A549 (cell line): ENCODE measurements at regions of chr9 and their contacts with region 1.

Region 1: DNA sequence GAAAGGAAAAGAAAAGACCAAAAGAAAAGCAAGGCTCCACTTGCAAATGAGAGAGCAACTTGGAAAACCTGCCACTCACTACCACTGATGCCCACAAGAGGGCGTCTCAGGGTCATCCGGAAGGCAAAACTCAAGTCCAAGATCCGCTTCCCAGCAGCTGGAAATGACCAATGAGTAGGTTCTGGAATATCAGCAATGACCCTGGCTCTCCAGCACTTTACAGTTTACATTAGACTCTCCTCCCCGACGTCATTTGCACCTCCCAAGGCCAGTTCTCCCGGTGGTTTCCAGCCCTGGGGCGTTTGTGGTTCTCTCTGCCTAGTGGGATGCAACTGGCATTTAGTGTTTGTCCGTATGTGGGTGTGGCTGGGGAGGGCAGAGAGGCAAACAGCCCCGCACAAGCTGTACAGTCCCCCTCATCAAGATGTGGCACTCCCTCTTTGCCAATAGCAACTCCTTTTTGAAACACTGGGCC is 193.8 kb upstream of the ZNF618 start:
- DNase-seq: peak; percentile 84 to 94
- ATAC-seq: peak; percentile 83 to 95
- H3K4me3 ChIP-seq: no peak overlapping the region
- H3K27ac ChIP-seq: peak overlapping the region; percentile 51 to 63
- H3K4me1 ChIP-seq: peaks cover 6% of the 10 kb centered on the region; the same call in 2 of the 3 replicates
- CTCF ChIP-seq: peak; percentile 93
- EP300 ChIP-seq: no peak
- POLR2A ChIP-seq: no peak
- RAD21 ChIP-seq: peak; percentile 77 to 81

Region 2: GRCh38 chr9:113636165-113636564 is 46.2 kb before region 1 on chr9:
- CTCF ChIA-PET with region 1: no interaction called
- POLR2A ChIA-PET with region 1: no interaction called
- DNase-seq: no peak
- ATAC-seq: no peak
- H3K4me3 ChIP-seq: no peak overlapping the region
- H3K27ac ChIP-seq: no peak overlapping the region
- H3K4me1 ChIP-seq: no peaks in the 10 kb centered on the region
- CTCF ChIP-seq: no peak
- EP300 ChIP-seq: no peak
- POLR2A ChIP-seq: no peak
- RAD21 ChIP-seq: no peak

Region 3: GRCh38 chr9:113664181-113664875 is 18.0 kb before region 1 on chr9:
- CTCF ChIA-PET with region 1: interaction called, 12 read pairs
- POLR2A ChIA-PET with region 1: no interaction called
- DNase-seq: no peak
- ATAC-seq: no peak
- H3K4me3 ChIP-seq: no peak overlapping the region
- H3K27ac ChIP-seq: no peak overlapping the region
- H3K4me1 ChIP-seq: no peaks in the 10 kb centered on the region
- CTCF ChIP-seq: no peak
- EP300 ChIP-seq: no peak
- POLR2A ChIP-seq: no peak
- RAD21 ChIP-seq: no peak

Region 4: GRCh38 chr9:113669522-113670115 is 12.7 kb before region 1 on chr9:
- CTCF ChIA-PET with region 1: interaction called, 12 read pairs
- POLR2A ChIA-PET with region 1: no interaction called
- DNase-seq: no peak
- ATAC-seq: no peak
- H3K4me3 ChIP-seq: no peak overlapping the region
- H3K27ac ChIP-seq: no peak overlapping the region
- H3K4me1 ChIP-seq: no peaks in the 10 kb centered on the region
- CTCF ChIP-seq: no peak
- EP300 ChIP-seq: no peak
- POLR2A ChIP-seq: no peak
- RAD21 ChIP-seq: no peak

Region 5: DNA sequence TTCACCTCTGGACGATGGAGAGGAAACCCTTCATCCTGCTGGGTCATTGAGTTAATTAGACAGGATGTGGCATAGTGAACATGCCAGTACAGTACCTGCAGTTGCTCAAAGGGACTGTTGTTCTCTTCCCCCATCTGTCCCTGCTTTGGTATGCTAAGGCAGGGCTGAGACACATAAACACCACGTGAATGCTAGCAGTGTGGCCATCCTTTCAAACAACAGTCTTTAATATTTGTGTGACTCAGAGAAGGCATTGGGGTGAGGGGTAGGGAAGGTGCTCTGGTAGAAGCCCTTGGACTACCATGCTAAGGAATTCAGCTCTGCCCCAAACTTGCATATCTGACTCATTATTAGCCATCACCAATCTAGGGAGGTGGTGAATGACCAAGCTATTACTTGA is 13.6 kb after region 1 on chr9:
- CTCF ChIA-PET with region 1: interaction called, 19 read pairs
- POLR2A ChIA-PET with region 1: no interaction called
- DNase-seq: no peak
- ATAC-seq: no peak
- H3K4me3 ChIP-seq: no peak overlapping the region
- H3K27ac ChIP-seq: no peak overlapping the region
- H3K4me1 ChIP-seq: no peaks in the 10 kb centered on the region
- CTCF ChIP-seq: no peak
- EP300 ChIP-seq: no peak
- POLR2A ChIP-seq: no peak
- RAD21 ChIP-seq: no peak

Region 6: DNA sequence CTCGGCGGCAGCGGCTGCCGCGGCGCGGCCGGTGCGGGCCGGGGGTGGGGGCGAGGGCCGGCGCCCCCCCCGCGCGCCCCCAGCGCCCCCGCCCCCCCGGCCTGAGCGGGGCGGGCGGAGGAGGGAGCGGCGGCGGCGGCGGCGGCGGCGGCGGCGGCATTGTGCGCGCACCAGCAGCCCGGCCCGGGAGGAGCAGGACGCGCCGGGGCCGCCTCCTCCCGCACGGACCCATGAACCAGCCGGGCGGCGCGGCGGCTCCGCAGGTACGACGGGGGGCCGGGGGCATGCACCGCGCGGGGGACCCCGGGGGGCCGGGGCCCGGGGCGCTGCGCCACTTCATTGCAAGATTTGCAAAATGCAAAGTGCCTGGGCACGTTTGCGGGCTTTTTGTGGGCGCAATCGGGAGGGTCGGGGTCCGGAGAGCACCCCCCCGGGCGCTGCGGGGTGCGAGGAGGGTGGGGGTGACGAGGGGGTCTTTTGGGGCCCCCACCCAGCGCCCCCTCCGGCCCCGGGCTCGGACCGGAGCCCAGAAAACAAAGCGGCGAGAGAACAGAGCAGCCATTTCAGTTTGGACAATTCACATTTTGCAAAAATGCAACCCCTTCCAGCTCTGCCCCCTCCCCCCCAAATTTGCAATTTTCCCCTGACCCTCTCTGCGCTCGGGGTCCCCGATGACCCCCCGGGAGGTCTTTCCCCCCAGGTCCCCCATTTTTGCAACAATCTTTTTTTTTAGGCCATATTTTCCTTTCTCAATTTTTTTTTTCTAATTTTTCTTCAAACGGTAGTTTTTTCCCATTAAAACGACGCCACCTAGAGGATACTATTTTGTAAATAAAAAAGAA is 194.0 kb after region 1 on chr9 and contains the start of gene ZNF618:
- CTCF ChIA-PET with region 1: interaction called, 13 read pairs
- POLR2A ChIA-PET with region 1: no interaction called
- DNase-seq: peak; percentile 29 to 55
- ATAC-seq: peak; percentile 87 to 89
- H3K4me3 ChIP-seq: peak within 1 kb of the TSS; percentile 100
- H3K27ac ChIP-seq: peak within 1 kb of the TSS; percentile 97 to 100
- H3K4me1 ChIP-seq: peaks cover 18% of the 10 kb centered on the region; the same call in 2 of the 3 replicates
- CTCF ChIP-seq: peak; percentile 71
- EP300 ChIP-seq: no peak
- POLR2A ChIP-seq: no peak
- RAD21 ChIP-seq: peak; percentile 7 to 52; a peak in 4 of 5 replicates
- polyA plus RNA-seq, gene ZNF618: 9.0 and 13.1 TPM in 2 replicates